Pancreas (tissue), 10 donors: ENCODE measurements at regions of chr17 and their contacts with region 1.

Region 1: DNA sequence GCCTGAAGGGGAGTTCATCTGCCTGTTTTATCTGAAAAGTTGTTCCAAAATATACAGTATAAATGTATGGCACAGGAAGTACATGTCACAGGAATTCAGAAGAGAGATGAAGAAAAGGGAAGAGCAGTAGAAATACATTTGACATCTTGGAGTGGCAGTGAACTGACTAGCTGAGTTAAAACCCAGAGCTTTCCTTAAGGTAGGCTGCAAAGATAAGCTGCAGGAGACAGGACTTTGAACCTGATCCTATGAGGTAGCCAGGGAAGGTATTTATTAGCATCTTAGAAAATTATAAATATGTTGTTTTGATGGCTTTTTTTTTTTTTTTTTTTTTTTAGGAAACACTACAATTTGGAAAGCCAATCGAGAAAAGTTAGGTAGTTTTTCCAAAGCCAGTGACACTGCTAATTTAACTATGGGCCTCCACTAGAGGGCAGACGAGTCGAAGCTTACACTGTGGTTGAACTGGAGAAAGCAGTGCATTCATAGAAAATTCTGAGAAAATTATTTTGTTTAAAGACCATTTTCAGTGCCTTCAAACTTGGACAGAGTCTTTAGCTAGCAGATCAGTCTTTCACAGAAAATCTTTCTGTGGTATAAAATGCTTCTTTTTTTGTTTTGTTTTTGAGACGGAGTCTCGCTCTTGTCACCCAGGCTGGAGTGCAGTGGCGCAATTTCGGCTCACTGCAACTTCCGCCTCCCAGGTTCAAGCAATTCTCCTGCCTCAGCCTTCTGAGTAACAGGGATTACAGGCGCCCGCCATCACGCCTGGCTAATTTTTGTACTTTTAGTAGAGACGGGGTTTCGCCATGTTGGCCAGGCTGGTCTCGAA is 122.3 kb downstream of the SSH2 start:
- DNase-seq: peak in 5 of 6 donors; percentile 30 to 74 (median 52)
- ATAC-seq: peak; percentile 84 to 96 (median 92)
- H3K4me3 ChIP-seq: no peak overlapping the region
- H3K27ac ChIP-seq: no peak overlapping the region
- H3K4me1 ChIP-seq: no peaks in the 10 kb centered on the region
- H3K27me3 ChIP-seq: no peaks in the 10 kb centered on the region
- CTCF ChIP-seq: peak; percentile 51 to 67 (median 61)

Region 2: GRCh38 chr17:29931231-29931932 is 123.6 kb after region 1 on chr17:
- intact Hi-C with region 1: loop called in 2 of 3 experiments (anchors 5 to 10 kb)
- DNase-seq: peak in 4 of 6 donors; percentile 36 to 62 (median 57)
- ATAC-seq: peak; percentile 46 to 78 (median 69)
- H3K4me3 ChIP-seq: peak overlapping the region in 2 of 4 donors; percentile 58 to 82
- H3K27ac ChIP-seq: peak overlapping the region in 2 of 4 donors; percentile 91 to 94
- H3K4me1 ChIP-seq: peaks cover 10 to 27% (median 22%) of the 10 kb centered on the region in 3 donors
- H3K27me3 ChIP-seq: no peaks in the 10 kb centered on the region
- CTCF ChIP-seq: peak; percentile 66 to 79 (median 74)

Region 3: DNA sequence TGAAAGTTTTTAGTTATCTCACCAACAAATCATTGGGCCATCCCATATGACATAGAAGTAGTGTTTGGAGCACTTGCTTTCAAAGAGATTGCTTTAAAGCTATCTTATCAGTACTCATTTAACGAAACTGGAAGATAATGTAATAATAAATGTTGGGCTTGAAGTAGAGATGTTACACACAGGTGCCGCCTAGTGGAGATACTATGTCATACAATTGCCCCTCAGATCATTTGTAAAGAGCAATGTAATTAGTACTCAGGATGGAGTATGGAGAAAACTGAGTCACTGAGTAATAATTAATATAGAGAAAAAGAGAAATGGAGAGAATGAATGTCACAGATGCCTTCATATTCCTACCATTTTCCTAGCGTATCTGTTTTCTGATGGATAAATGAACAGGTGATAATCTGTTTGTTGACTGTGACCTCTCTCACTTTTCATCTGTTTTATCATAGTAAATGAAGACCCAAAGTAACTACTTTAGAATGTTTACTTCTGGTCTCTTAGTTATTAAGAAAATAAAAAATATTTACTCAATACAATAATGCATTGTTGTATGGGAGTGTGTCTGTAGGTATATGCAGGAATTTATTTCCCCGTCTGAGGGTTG is 214.1 kb after region 1 on chr17:
- intact Hi-C with region 1: loop called in 1 of 3 experiments (anchors 10 kb)
- DNase-seq: peak in 1 of 6 donors; percentile 18
- ATAC-seq: peak in 3 of 4 donors; percentile 54 to 81 (median 73)
- H3K4me3 ChIP-seq: no peak overlapping the region
- H3K27ac ChIP-seq: no peak overlapping the region
- H3K4me1 ChIP-seq: no peaks in the 10 kb centered on the region
- H3K27me3 ChIP-seq: no peaks in the 10 kb centered on the region
- CTCF ChIP-seq: peak; percentile 38 to 81 (median 68)